PC-3 (cell line): ENCODE measurements at regions of chr13 and their contacts with region 1.

Region 1: DNA sequence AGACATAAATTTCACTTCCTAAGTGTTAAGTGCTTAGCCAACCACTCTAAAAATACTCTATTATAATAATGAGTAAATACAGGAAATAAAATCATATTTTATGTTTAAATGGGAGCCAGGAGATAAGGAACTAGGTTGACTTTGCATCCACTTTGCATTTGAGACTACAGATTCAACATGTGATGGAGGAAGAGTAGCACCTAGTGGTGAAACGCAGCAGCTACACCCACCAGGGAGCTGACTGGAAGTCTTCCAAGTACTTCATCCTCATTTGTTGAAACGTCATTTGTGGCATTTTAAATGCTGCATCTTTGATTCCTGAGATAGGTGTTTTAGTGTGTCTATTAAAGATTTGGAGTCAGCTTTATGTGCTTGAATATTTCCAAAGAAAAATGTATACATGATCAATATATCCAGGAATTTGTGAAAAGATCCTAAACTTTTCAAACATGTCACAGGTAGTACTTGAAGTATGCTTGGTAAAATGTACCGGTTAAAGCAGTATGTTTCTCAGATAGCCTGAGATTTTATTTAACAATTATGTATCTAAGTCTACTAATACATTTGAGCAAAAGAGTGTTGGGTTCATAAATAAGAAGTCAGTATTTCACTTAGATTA is 17.4 kb upstream of the KCTD12 start:
- DNase-seq: peak; percentile 79
- ATAC-seq: peak; percentile 64
- H3K4me3 ChIP-seq: no peak overlapping the region
- H3K27ac ChIP-seq: no peak overlapping the region
- H3K4me1 ChIP-seq: no peaks in the 10 kb centered on the region
- H3K27me3 ChIP-seq: peaks cover 7% of the 10 kb centered on the region; the same call in 1 of the 2 replicates
- CTCF ChIP-seq: peak; percentile 93

Region 2: DNA sequence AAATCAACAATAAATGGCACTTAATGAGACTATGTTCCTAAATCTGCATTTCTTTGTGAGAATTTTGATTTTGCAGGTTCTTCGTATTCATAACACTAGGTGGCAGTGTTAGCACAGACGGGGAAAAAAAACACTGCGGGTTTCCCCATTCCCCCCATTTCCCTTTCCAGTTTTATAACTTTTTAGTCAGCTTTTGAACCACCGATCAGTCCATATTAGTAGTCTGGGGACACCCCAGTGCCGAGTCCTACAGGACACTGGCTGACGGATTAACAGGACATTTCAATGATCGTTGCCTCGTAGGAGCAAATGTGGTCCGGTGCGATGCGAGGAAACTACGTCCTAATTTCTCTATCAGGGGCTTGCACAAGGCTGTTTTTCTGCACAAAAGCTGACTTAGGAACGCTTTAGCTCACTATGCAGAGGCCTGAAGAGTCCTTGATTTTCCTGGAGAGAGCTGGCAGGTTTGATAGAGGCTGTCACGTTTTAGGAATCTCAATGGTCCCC is 1033.2 kb before region 1 on chr13:
- CTCF ChIA-PET with region 1: no interaction called
- POLR2A ChIA-PET with region 1: no interaction called
- intact Hi-C with region 1: loop called (anchors 2 kb)
- DNase-seq: peak; percentile 56
- ATAC-seq: peak; percentile 30
- H3K4me3 ChIP-seq: peak overlapping the region; percentile 84
- H3K27ac ChIP-seq: no peak overlapping the region
- H3K4me1 ChIP-seq: peaks cover 6% of the 10 kb centered on the region
- H3K27me3 ChIP-seq: no peaks in the 10 kb centered on the region
- CTCF ChIP-seq: peak; percentile 82

Region 3: DNA sequence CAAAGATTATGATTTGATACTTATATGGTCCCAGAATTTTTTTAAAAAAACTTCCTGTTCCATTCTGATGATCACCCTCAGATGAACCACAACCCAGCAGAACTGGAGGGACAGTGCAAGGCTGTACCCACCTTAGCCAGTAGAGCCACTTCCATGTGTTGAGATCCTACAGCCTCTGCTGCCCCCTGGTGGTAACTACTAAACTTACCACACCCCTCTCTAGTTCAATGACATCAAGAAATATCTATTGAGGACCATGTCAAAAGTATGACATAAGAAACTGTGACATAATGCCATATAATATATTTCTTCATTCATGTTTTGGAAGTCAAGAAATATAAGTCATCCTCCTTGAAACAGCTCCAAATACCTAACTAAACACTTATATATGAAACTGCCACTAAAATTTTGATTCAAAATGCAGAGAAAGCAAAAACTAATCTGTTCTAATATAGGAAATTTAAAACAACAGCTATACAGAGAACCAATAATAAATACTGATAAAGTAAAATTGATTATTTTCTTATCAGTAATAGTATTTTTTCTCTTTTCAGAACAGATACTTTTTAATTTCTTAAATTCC is 430.0 kb before region 1 on chr13:
- CTCF ChIA-PET with region 1: no interaction called
- POLR2A ChIA-PET with region 1: no interaction called
- intact Hi-C with region 1: loop called (anchors 2 kb)
- DNase-seq: peak; percentile 79
- ATAC-seq: peak; percentile 93
- H3K4me3 ChIP-seq: no peak overlapping the region
- H3K27ac ChIP-seq: no peak overlapping the region
- H3K4me1 ChIP-seq: no peaks in the 10 kb centered on the region
- H3K27me3 ChIP-seq: no peaks in the 10 kb centered on the region
- CTCF ChIP-seq: peak; percentile 80

Region 4: DNA sequence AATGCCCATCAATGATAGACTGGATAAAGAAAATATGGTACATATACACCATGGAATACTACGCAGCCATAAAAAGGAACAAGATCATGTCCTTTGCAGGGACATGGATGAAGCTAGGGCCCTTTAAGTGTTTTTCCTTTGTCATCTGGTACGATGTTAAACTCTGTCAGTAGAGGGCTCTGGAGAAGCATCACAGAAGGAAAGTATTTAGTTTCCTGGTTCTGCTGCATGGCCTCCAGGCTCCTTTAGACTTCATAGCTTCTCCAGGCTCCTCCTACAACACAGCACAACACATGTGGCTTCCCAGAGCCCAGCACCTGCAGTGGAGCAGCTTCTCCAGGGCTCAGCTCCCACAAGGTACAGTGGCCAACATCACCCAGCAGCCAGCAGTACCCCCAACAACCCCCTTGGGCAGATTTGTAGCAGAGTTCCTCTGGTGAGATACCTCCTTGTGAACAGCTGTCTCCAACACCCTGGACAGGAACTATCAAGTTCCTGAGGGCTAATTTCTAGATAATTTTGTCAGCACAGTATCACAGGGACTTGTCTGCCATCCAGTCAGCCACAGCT is 80.9 kb before region 1 on chr13:
- CTCF ChIA-PET with region 1: no interaction called
- POLR2A ChIA-PET with region 1: no interaction called
- intact Hi-C with region 1: loop called (anchors 1 kb)
- DNase-seq: peak; percentile 53
- ATAC-seq: peak; percentile 79
- H3K4me3 ChIP-seq: no peak overlapping the region
- H3K27ac ChIP-seq: no peak overlapping the region
- H3K4me1 ChIP-seq: no peaks in the 10 kb centered on the region
- H3K27me3 ChIP-seq: no peaks in the 10 kb centered on the region
- CTCF ChIP-seq: peak; percentile 47

Region 5: DNA sequence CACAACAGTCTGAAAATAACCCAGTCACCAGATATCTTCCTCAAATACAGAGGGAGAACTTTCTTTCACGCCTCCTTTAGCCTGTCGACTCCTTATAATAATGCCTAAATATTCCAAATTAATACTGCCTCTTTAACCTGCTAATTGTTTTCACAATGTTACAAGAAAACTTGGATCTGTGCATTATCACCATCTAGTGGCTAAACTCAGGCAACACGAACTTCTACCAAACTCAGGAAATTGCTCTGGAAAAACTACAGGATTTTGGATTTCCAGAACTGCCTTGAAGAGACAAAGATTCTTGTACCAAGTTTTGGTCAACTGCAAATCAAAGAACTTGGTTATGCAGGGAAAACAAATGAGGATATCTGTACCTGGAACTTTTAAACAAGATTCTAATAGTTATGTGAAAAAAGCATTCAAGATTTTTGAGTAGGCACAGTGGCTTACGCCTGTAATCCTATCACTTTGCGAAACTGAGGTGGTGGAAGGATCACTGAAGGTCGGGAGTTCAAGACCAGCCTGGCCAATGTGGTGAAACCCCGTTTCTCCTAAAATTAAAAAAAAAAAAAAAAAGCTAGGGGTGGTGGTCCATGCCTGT is 99.0 kb after region 1 on chr13:
- CTCF ChIA-PET with region 1: interaction called, 9 read pairs
- POLR2A ChIA-PET with region 1: no interaction called
- intact Hi-C with region 1: loop called (anchors 5 kb)
- DNase-seq: peak; percentile 53
- ATAC-seq: peak; percentile 25
- H3K4me3 ChIP-seq: no peak overlapping the region
- H3K27ac ChIP-seq: no peak overlapping the region
- H3K4me1 ChIP-seq: peaks cover 15% of the 10 kb centered on the region
- H3K27me3 ChIP-seq: no peaks in the 10 kb centered on the region
- CTCF ChIP-seq: peak; percentile 74